ENCODE measurements at regions of chr4 and their contacts with region 1.

Region 1: GRCh38 chr4:10192331-10192730 is 75.7 kb upstream of the WDR1 start:
- DNase-seq: no peak
- H3K4me3 ChIP-seq: no peak overlapping the region
- H3K27ac ChIP-seq: no peak overlapping the region
- H3K4me1 ChIP-seq: no peaks in the 10 kb centered on the region
- H3K27me3 ChIP-seq: no peaks in the 10 kb centered on the region
- CTCF ChIP-seq: no peak
- EP300 ChIP-seq: no peak
- POLR2A ChIP-seq: no peak

Region 2: GRCh38 chr4:9964879-9965278 is 227.5 kb before region 1 on chr4:
- intact Hi-C with region 1: no loop called
- DNase-seq: no peak
- H3K4me3 ChIP-seq: no peak overlapping the region
- H3K27ac ChIP-seq: no peak overlapping the region
- H3K4me1 ChIP-seq: no peaks in the 10 kb centered on the region
- H3K27me3 ChIP-seq: no peaks in the 10 kb centered on the region
- CTCF ChIP-seq: no peak
- EP300 ChIP-seq: no peak
- POLR2A ChIP-seq: no peak

Region 3: DNA sequence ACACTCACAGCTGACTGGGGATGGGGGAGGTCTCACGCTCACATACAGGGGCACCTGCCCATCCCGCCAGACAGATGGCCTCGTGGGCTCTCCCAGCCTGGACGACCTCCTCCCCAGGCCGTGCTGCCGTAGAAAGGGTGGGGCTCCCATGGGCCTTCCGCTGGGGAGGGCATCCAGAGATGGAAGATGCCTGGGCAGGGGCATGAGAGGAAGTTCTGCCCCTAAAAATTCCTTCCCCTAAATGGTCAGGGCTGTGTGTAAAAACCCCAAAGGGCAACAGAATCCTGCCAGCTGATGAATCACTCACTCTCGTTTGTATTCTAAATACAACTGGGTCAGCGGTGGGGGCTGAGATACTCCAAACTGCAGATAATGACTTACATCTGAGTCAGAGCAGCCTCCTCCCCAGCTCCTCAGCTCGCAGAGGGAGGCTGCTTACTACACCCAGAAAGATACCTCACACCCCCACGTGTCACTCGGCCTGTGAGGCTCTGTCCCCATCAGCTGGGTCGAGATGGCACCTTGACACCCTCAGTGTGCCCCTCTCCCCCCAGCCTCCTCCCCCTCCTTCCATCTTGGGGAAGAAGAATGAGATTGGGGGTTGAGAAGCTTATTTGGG is 85.8 kb before region 1 on chr4:
- intact Hi-C with region 1: no loop called
- DNase-seq: peak; percentile 78 to 90 (median 83)
- H3K4me3 ChIP-seq: peak overlapping the region; percentile 33
- H3K27ac ChIP-seq: peak overlapping the region; percentile 70 to 73
- H3K4me1 ChIP-seq: peaks cover 44% of the 10 kb centered on the region
- H3K27me3 ChIP-seq: no peaks in the 10 kb centered on the region
- CTCF ChIP-seq: no peak
- EP300 ChIP-seq: no peak
- POLR2A ChIP-seq: no peak

Region 4: DNA sequence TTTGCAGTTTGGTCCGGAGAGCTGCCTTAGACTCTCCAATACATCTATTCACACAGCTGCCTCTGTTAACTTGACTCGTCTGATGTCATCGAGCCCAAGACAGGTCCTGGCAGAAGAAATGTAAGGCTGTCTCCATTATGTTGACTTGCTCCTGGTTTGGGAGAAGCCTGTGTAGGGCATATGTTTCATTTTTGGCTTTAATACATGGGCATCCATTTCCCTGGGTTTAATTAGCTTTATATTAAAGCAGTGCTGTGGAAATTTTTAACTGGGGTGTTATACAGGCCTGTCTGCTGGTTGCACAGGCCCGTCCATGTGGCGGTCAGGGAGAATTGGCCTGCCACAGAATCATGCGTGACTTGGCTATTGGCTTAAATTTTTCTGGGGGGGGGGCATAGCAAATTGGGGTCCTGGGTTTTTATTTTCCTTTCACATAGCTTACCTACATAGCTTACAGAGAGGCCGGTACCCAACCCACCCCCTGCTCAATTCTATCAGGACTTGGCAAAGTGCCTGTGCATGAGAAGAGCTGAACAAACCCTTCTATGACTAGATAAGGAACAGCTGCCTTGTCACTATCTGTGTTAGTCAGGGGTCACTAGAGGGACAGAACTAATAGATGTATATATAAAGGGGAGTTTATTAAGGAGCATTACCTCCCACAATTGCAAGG is 47.8 kb after region 1 on chr4:
- intact Hi-C with region 1: loop called in 1 of 4 experiments (anchors 10 kb)
- DNase-seq: no peak
- H3K4me3 ChIP-seq: no peak overlapping the region
- H3K27ac ChIP-seq: no peak overlapping the region
- H3K4me1 ChIP-seq: no peaks in the 10 kb centered on the region
- H3K27me3 ChIP-seq: no peaks in the 10 kb centered on the region
- CTCF ChIP-seq: no peak
- EP300 ChIP-seq: no peak
- POLR2A ChIP-seq: no peak